Endothelial cell of umbilical vein (primary cell): ENCODE measurements at regions of chr17 and their contacts with region 1.

Region 1: DNA sequence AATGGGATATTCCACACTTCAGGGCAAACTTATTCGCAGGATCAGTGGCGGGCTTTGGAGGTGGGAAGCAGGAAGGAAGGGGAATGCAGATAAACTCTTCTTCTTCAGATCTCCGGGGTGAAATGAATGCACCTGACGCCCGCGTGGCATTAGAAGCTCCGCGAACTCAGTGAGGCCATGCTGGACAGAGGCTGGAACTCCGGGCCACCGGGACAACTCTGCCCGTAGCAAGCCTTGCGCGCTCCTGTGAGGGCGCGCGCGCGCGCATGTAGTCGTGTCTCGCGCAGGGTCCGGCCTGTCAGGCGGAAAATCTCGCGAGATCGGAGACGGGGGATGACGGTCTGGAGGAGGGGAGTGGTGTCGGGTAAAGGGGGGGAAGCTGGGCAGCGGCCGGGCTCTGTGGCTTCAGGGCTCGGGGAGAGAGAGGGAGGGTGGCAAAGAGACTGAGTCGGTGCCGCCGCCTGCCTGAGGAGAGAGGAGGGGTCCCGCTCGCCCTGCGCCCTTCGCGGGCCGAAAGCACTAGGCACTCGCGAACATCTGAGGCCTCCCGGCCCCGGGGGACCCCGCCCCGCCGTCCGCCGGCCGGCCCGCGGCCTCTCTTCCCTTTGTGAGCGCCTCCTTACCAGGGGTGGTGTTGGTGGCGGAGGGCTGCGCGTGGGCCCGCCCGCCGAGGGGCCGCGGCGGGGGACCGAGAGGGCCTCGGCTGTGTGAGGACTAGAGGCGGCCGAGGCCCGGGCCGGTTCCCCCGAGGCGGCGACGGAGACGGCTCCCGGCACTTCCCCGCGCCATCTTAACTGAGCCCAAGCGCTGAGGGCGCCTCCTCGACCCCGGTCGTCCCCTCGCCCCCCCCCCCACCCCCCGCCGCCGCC is at the start of gene TAOK1:
- DNase-seq: peak; percentile 97
- H3K4me3 ChIP-seq: peak within 1 kb of the TSS; percentile 85 to 97 (median 87)
- H3K27ac ChIP-seq: peak within 1 kb of the TSS; percentile 86
- H3K4me1 ChIP-seq: peaks cover 27% of the 10 kb centered on the region
- H3K27me3 ChIP-seq: peaks cover 0 to 1% of the 10 kb centered on the region in 2 experiments
- CTCF ChIP-seq: no peak
- POLR2A ChIP-seq: peak; percentile 96
- total RNA-seq, gene TAOK1: 64.3 and 82.2 TPM in 2 replicates

Region 2: DNA sequence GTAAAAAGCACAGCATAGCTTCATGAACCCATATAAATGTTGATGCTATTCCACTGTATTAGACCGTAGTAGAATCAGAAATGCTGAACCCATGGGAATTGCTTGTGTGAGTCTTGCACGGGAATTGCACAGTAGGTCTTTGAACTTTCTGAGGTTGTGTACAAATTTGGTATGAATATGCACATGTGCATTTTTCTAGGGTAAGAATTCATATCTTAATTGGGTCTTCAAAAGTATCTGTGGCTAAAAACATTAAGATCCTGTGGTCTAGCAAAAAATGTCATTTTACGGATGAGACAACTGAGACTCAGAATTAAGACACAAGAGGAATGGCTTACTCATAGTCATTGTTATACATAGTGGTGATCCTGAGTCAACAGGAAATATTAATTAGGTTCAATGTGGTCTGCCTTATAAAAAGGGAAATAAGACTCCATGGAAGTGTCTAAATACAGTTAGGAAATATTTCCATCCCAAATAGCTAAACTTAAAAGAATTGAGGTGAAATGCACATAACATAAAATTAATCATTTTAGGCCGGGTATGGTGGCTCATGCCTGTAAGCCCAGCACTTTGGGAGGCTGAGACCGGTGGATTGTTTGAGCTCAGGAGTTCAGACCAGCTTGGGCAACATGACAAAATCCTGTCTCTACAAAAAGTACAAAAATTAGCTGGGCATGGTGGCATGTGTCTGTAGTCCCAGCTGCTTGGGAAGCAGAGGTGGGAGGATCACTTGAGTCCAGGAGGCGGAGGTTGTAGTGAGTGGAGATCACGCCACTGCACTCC is 22.8 kb after region 1 on chr17:
- CTCF ChIA-PET with region 1: no interaction called
- POLR2A ChIA-PET with region 1: no interaction called
- dilution Hi-C with region 1: no loop called
- intact Hi-C with region 1: loop called (anchors 2 kb)
- DNase-seq: peak; percentile 80
- H3K4me3 ChIP-seq: no peak overlapping the region
- H3K27ac ChIP-seq: peak overlapping the region; percentile 53
- H3K4me1 ChIP-seq: peaks cover 22% of the 10 kb centered on the region
- H3K27me3 ChIP-seq: no peaks in the 10 kb centered on the region
- CTCF ChIP-seq: no peak
- POLR2A ChIP-seq: no peak

Region 3: DNA sequence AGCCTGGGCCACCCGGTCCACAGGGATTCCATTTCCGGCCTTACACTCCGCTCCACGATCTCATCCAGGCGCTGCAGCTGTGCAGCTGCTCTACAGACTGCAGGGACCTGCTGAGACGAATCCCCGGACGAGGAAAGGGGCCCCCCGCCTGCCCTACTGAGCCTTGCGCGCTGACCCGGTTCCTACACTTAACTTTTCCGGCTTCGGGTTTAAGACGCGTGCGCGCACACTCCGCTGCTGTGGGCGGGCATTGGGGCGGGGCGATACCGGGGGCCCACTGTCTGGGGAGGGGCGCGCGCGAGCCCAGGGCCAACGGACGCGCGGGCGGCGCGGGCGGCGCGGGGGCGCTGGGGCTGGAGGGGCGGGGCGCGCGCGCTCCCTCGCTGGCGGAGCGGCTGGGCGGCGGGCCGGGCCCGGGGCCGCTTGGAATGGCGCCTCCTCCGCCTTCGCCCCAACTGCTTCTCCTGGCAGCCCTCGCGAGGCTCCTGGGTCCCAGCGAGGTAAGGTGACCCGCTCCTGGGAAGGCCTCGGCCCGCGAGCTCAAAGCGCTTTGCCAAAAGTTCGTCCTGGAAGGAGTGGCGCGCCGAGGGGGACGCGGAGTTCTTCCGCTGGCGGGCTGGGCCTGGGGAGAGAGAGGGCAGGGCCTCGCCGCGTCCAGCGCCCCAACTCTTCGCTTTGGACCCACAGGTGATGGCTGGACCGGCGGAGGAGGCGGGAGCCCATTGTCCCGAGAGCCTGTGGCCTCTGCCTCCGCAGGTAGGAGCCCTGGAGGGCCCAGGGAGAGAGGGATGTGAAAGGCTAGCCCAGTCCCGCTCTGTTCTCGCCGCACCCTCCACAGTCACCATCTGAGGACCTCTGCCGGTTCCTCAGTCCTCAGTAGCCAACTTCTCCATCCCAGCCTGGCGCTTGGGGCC is 178.4 kb after region 1 on chr17 and contains the start of gene TP53I13:
- CTCF ChIA-PET with region 1: no interaction called
- POLR2A ChIA-PET with region 1: no interaction called
- dilution Hi-C with region 1: no loop called
- intact Hi-C with region 1: loop called (anchors 5 kb)
- DNase-seq: peak; percentile 82
- H3K4me3 ChIP-seq: peak within 1 kb of the TSS; percentile 46 to 77 (median 70)
- H3K27ac ChIP-seq: peak within 1 kb of the TSS; percentile 24
- H3K4me1 ChIP-seq: peaks cover 26% of the 10 kb centered on the region
- H3K27me3 ChIP-seq: no peaks in the 10 kb centered on the region
- CTCF ChIP-seq: no peak
- POLR2A ChIP-seq: peak; percentile 57
- total RNA-seq, gene TP53I13: 33.8 and 41.1 TPM in 2 replicates

Region 4: DNA sequence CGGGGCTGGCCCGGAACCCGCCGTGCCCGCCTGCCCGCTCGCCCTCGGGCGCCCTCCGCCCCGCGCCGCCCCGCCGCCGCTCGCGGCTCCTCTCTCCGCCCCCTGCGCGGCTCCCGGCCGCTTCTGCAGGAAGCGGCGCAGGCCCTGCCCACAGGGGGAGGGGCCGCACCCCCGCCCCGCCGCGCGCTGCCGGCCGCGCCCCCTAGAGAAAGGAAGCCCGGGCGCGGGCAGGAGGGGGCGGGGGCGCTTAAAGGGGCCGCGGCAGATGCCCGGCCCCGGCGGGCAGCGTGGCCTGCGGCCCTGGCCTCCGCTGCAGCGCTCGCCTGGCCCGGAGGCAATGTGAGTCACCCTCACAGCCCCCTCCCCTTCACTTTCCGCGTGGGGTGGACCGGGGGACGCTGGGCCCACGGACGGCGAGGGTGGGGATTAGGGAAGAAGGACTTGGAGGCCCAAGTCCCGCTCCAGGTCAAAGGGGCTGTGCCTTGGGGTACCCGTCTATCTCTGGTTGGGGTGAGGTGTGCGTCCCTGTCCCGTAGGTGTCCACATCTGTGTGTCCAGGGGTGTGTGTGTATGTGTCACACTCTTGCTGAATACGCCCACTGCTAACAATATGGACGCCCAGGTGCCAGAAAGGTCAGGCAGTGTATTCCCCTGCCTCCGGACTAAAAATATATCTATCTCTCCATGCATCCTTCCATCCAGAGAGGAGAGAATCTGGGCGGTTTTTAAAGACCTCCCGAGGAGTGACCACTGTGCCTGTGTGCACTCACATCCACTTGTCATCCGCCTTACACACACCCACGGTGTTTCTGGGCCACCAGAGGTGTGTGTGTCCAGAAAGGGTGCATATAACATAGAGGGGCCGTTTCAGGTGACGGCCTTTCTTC is 199.6 kb after region 1 on chr17 and contains the start of gene GIT1:
- CTCF ChIA-PET with region 1: no interaction called
- POLR2A ChIA-PET with region 1: no interaction called
- dilution Hi-C with region 1: no loop called
- intact Hi-C with region 1: loop called (anchors 5 kb)
- DNase-seq: peak; percentile 82
- H3K4me3 ChIP-seq: peak within 1 kb of the TSS; percentile 58 to 69 (median 68)
- H3K27ac ChIP-seq: peak within 1 kb of the TSS; percentile 66
- H3K4me1 ChIP-seq: peaks cover 76% of the 10 kb centered on the region
- H3K27me3 ChIP-seq: no peaks in the 10 kb centered on the region
- CTCF ChIP-seq: no peak
- POLR2A ChIP-seq: peak; percentile 75
- total RNA-seq, gene GIT1: 82.0 and 92.5 TPM in 2 replicates